GM12878 (cell line): ENCODE measurements at regions of chr17 and their contacts with region 1.

Region 1: GRCh38 chr17:6323582-6324356 is 111.2 kb downstream of the AIPL1 start:
- DNase-seq: no peak
- ATAC-seq: no peak
- H3K4me3 ChIP-seq: no peak overlapping the region
- H3K27ac ChIP-seq: no peak overlapping the region
- H3K4me1 ChIP-seq: no peaks in the 10 kb centered on the region
- H3K27me3 ChIP-seq: no peaks in the 10 kb centered on the region; a peak in 1 of 4 replicates
- CTCF ChIP-seq: no peak
- EP300 ChIP-seq: no peak
- POLR2A ChIP-seq: no peak
- RAD21 ChIP-seq: no peak

Region 2: GRCh38 chr17:6286239-6286638 is 37.5 kb before region 1 on chr17:
- CTCF ChIA-PET with region 1: no interaction called
- POLR2A ChIA-PET with region 1: no interaction called
- RAD21 ChIA-PET with region 1: no interaction called
- SMC1A ChIA-PET with region 1: no interaction called
- in situ Hi-C with region 1: no loop called
- intact Hi-C with region 1: no loop called
- DNase-seq: no peak
- ATAC-seq: no peak
- H3K4me3 ChIP-seq: no peak overlapping the region
- H3K27ac ChIP-seq: no peak overlapping the region
- H3K4me1 ChIP-seq: no peaks in the 10 kb centered on the region
- H3K27me3 ChIP-seq: peaks cover 0 to 2% of the 10 kb centered on the region in 2 experiments; a peak in 1 of 4 replicates
- CTCF ChIP-seq: no peak
- EP300 ChIP-seq: no peak
- POLR2A ChIP-seq: no peak
- RAD21 ChIP-seq: no peak

Region 3: GRCh38 chr17:6303664-6304063 is 20.1 kb before region 1 on chr17:
- CTCF ChIA-PET with region 1: no interaction called
- POLR2A ChIA-PET with region 1: no interaction called
- RAD21 ChIA-PET with region 1: no interaction called
- SMC1A ChIA-PET with region 1: no interaction called
- in situ Hi-C with region 1: no loop called
- intact Hi-C with region 1: no loop called
- DNase-seq: no peak
- ATAC-seq: no peak
- H3K4me3 ChIP-seq: no peak overlapping the region
- H3K27ac ChIP-seq: no peak overlapping the region
- H3K4me1 ChIP-seq: no peaks in the 10 kb centered on the region
- H3K27me3 ChIP-seq: no peaks in the 10 kb centered on the region
- CTCF ChIP-seq: no peak
- EP300 ChIP-seq: no peak
- POLR2A ChIP-seq: no peak
- RAD21 ChIP-seq: no peak

Region 4: GRCh38 chr17:6366221-6366666 is 42.5 kb after region 1 on chr17:
- CTCF ChIA-PET with region 1: no interaction called
- POLR2A ChIA-PET with region 1: no interaction called
- RAD21 ChIA-PET with region 1: no interaction called
- SMC1A ChIA-PET with region 1: no interaction called
- in situ Hi-C with region 1: loop called (anchors 5 kb)
- intact Hi-C with region 1: no loop called
- DNase-seq: no peak
- ATAC-seq: no peak
- H3K4me3 ChIP-seq: no peak overlapping the region
- H3K27ac ChIP-seq: no peak overlapping the region
- H3K4me1 ChIP-seq: no peaks in the 10 kb centered on the region
- H3K27me3 ChIP-seq: no peaks in the 10 kb centered on the region
- CTCF ChIP-seq: no peak
- EP300 ChIP-seq: no peak
- POLR2A ChIP-seq: no peak
- RAD21 ChIP-seq: no peak